ENCODE measurements at regions of chr11 and their contacts with region 1.

Region 1: DNA sequence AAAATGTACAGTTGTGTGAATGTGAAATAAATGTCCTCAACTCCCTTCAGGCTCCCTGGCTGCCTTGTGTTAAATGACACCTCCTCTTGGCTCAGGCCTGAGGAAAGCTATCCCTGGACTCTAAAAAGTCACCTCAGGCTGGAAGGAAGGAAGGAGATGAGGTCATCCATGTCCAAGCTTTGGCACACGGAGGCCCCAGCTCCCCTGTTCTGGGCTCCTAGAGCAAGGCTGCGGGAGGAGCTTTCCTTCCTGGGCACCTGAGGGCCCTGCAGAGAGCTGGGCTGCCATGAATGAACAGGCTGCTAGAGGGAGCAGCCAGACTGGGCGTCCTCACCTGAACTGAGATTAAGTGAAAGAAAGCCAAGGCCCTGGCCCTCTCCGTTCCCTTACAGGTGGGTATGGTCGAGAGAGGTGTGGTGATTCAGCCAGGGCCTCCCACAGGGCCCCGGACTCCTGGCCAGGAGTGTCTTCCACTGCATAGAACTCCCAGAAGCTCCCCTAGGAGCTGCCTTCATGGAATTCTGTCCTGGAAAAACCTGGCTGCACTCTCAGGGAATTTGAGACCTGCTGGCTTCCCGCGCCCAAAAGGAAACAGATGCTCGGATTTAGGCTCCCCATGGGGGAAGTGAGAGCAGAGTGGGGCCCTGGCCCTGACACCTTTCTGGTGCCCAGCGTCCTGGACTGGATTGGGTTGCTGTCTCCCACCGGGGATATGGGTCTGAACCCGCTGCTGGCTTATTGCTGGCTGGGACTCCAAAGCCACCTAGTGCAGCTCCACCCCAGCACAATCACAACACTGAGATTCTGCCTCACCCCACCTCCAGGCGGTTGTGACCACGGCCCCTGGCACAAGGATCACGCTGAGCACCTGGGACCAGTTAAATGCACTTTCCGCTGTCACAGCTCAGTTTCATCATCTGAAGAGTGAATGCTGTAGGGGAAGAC is 22.2 kb downstream of the MYBPC3 start:
- DNase-seq: peak in 1 of 2 donors; percentile 77
- ATAC-seq: peak; percentile 84 to 94 (median 92)
- H3K4me3 ChIP-seq: peak overlapping the region; percentile 20
- H3K27ac ChIP-seq: peak overlapping the region; percentile 81
- H3K4me1 ChIP-seq: peaks cover 36% of the 10 kb centered on the region
- H3K27me3 ChIP-seq: no peaks in the 10 kb centered on the region
- CTCF ChIP-seq: no peak

Region 2: DNA sequence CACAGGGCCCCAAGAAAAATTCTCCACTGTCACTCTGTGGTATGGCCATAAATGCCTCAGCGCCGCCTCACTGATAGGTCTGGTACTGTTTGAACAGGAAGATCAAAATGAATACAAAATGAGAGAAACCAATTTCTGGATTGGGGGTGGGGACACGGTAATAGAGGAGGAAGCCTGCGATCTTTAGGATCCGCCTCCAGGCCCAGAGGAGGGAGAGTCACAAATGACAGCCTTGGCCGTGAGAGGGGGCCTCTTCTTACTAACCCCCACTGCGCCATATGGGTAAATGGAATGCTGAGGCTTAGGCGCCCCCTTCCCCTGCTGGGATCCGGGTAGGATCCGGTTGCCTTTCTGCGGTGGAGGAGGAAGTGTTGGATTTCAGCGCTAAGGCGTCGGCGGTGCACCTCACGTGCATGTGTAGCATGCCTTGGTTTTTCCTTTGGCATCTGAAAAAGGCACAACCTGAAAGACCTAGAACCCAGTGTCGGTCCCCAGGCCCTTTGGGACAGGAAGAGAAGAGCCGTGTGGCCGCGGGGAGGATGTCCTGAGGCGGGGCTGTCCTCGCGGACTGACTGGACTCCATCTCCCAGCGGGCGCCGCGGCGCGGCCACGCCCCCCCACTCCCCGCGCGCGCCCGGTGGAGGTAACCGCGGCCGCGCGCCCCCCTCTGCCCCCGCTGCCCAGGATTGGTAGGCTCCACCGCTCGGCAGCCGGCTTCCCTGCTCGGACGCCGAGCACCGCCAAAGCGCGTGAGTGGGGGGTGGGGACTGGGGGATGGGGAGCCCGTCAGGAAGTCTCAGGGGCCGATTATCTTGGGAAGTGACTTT is 61.0 kb before region 1 on chr11:
- intact Hi-C with region 1: loop called in 1 of 2 experiments (anchors 2 kb)
- DNase-seq: peak; percentile 93 to 96
- ATAC-seq: peak; percentile 89 to 90 (median 90)
- H3K4me3 ChIP-seq: peak overlapping the region; percentile 88
- H3K27ac ChIP-seq: peak overlapping the region; percentile 96
- H3K4me1 ChIP-seq: peaks cover 46% of the 10 kb centered on the region
- H3K27me3 ChIP-seq: no peaks in the 10 kb centered on the region
- CTCF ChIP-seq: no peak

Region 3: DNA sequence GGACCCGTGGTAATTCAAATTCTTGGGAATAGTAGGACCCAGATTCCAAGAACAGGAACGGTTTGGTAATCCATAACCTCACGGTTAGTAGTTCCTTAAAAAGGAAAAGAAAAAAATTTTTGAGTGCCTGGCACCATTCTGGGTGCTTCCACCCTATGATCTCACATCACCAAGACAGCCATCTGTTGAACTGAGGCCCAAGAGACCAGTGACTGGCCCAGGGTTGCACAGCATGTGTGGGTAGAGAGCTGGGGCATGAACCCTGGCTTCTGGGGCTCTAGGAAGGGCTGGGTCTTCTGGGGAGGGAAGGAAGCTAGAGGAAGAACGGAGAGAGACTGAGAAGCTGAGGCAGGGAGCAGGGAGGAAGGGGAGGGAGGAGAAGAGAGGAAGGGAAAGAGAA is 52.8 kb after region 1 on chr11:
- intact Hi-C with region 1: loop called in 1 of 2 experiments (anchors 2 kb)
- DNase-seq: no peak
- ATAC-seq: no peak
- H3K4me3 ChIP-seq: no peak overlapping the region
- H3K27ac ChIP-seq: no peak overlapping the region
- H3K4me1 ChIP-seq: no peaks in the 10 kb centered on the region
- H3K27me3 ChIP-seq: no peaks in the 10 kb centered on the region
- CTCF ChIP-seq: no peak